BJ (cell line): ENCODE measurements at regions of chrX and their contacts with region 1.

Region 1: GRCh38 chrX:48798318-48798717 is 3.5 kb upstream of the HDAC6 start:
- DNase-seq: no peak
- H3K4me3 ChIP-seq: no peak overlapping the region
- H3K27me3 ChIP-seq: no peaks in the 10 kb centered on the region
- CTCF ChIP-seq: no peak

Region 2: DNA sequence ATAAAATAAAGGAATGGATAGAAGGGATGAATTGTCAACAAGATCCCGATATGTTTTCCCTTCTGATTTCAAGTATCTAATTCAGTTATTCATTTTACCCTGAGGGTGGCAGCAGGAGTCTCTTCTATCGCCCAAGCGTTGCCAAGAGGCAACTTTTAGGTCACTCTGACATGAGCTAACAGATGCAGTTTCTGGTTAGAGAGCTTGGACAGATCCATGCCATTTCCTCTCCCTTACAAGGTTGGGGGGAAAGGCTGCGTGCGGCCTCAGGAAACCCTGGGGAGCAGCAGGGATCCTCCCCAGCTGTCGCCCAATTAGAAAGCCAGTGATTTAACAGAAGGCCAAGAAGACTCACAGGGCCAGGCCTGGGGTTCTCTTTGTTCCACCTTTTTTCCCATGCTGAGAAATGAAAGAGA is 150.0 kb before region 1 on chrX:
- CTCF ChIA-PET with region 1: no interaction called
- POLR2A ChIA-PET with region 1: no interaction called
- DNase-seq: peak; percentile 6
- H3K4me3 ChIP-seq: no peak overlapping the region
- H3K27me3 ChIP-seq: peaks cover 2% of the 10 kb centered on the region; the same call in 1 of the 2 replicates
- CTCF ChIP-seq: peak; percentile 25; the same call in 1 of the 2 replicates

Region 3: DNA sequence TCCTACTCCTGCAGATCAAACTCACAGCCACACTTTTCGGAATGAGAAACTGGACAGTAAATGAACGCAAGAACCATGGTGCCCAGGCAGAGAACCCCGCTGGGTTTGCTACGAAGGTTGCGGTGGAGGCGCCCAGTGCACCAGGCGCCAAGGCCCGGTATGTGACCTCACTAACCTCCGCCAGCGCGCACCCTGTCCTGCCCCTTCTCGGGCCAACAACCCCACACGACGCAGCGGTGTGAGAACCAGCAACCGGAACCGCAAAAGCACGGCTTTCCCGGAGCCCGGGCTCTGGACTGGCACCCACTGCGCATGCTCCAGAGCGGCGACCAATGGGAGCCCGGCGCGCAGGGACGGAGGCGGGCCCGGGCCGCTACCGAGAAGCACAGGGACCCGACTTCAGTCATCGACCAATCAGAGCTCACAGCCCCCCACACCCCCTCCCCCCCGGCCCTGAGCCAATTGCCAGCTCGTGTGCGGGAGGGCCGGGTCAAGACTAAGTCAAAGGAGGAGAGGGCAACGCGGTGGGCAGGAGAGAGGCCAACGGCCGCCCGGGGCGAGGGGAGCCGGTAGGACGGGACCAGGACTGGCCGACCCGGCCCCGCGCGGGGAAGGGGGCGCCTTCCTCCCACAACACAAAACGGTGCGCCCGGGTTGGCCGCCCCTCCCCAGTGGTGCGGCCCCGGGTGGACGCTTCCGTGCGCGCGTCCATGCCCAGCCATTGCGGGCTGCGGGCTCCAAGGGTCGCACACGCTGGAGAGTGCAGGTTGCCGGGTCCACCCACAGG is 122.0 kb before region 1 on chrX:
- CTCF ChIA-PET with region 1: no interaction called
- POLR2A ChIA-PET with region 1: interaction called, 15 read pairs
- DNase-seq: peak; percentile 26
- H3K4me3 ChIP-seq: peak overlapping the region; percentile 56
- H3K27me3 ChIP-seq: no peaks in the 10 kb centered on the region
- CTCF ChIP-seq: no peak